Gastrocnemius medialis (tissue), 4 donors: ENCODE measurements at regions of chr3 and their contacts with region 1.

Region 1: DNA sequence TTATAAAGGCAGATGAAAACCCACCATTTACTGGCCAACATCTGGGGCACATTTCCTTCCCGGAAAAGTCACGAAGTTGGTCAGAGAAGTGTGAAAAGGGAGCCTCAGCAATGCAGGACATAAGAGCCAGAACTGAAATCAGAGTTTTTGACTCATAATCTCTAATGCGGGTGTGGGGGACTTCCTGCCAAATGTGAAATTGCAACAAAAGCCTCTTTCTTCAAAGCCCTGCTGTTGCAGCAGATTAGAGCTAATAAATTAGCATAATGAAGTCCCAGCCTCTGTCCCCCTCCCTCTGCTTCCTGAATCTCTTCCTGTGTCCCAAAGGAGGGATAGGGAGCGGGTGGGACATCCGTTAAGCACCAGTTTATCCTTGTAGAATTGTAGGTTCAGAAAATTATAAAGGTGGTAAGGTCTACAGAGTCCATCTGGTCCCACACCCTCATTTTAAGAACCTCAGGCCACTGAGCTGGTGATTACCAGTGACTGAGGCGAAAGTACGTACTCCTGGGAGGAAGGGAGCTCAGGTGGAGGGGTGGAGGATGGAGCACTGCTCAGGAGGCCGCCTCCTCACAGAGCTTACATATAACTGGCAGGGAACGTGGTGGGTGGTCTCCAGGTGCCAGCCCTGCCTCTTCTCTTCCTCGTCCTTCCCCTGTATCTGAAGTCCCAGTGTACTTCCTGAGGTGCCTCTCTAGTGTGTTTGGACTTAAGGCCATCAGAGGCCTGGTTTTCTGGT is 35.0 kb downstream of the ST6GAL1 start:
- DNase-seq: no peak
- ATAC-seq: no peak
- H3K4me3 ChIP-seq: no peak overlapping the region
- H3K27ac ChIP-seq: peak overlapping the region; percentile 53 to 82 (median 63)
- H3K4me1 ChIP-seq: peaks cover 20 to 49% of the 10 kb centered on the region in 2 donors
- H3K27me3 ChIP-seq: no peaks in the 10 kb centered on the region
- CTCF ChIP-seq: no peak
- POLR2A ChIP-seq: no peak

Region 2: DNA sequence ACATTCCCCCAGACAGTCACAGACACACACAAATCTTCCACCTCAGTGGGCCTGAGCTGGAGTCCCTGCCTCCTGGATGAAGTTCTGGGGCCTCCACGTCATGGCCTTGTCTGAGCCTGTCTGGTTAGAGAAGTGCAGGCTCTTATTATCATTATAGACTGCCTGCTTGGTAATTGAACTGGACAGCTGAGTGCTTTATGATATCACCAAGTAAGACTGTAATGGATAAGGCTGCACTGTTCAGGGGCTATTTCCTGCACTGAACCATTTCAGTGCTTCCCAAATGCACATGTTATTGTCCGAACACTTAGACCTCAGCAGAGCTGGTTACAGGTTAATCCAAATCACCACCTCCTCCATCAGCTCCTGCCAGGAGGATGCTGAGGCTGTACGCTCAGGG is 43.7 kb before region 1 on chr3:
- in situ Hi-C with region 1: loop called in 1 of 4 experiments (anchors 10 kb)
- intact Hi-C with region 1: loop called (anchors 1 kb)
- DNase-seq: no peak
- ATAC-seq: no peak
- H3K4me3 ChIP-seq: no peak overlapping the region
- H3K27ac ChIP-seq: no peak overlapping the region
- H3K4me1 ChIP-seq: peaks cover 10 to 19% of the 10 kb centered on the region in 2 donors
- H3K27me3 ChIP-seq: no peaks in the 10 kb centered on the region
- CTCF ChIP-seq: no peak
- POLR2A ChIP-seq: no peak

Region 3: GRCh38 chr3:186938716-186939115 is 26.6 kb before region 1 on chr3:
- in situ Hi-C with region 1: no loop called
- intact Hi-C with region 1: loop called (anchors 2 kb)
- DNase-seq: peak in 1 of 2 donors; percentile 27
- ATAC-seq: peak; percentile 57 to 74
- H3K4me3 ChIP-seq: no peak overlapping the region
- H3K27ac ChIP-seq: peak overlapping the region; percentile 20 to 73 (median 50)
- H3K4me1 ChIP-seq: peaks cover 34 to 49% of the 10 kb centered on the region in 2 donors
- H3K27me3 ChIP-seq: no peaks in the 10 kb centered on the region
- CTCF ChIP-seq: no peak
- POLR2A ChIP-seq: no peak